ENCODE measurements at regions of chrX and their contacts with region 1.

Region 1: DNA sequence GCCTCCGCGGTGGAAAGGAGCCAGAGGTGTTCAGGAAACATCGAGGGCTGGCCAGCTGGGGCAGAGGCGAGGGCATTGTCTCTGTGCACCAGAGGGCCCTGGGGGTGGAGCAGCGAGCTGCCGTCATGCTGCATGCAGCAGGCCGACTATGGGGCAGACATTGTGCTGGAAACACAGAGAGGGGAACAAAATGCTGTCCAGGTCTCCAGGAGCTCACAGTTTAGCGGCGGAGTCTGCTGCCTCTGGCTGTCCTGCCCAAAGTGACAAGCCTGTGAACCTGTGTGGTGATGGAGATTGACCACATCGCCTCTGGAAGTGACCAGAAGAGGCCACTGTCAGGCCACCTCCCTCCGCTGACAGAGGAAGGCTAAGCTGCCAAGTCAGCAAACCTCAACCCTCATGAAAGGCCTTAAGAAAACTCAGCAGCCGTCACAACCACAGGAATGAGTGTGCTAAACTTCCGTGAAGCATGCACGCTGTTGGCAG is 20.1 kb upstream of the SASH3 start:
- DNase-seq: peak in 12 of 14 experiments; percentile 28 to 85 (median 46)
- ATAC-seq: peak; percentile 81
- H3K4me3 ChIP-seq: peak overlapping the region; percentile 5
- H3K4me3 Mint-ChIP-seq: peak overlapping the region; percentile 72
- H3K27ac ChIP-seq: peak overlapping the region; percentile 35 to 40
- H3K27ac Mint-ChIP-seq: peak overlapping the region; percentile 85
- H3K4me1 ChIP-seq: peaks cover 82% of the 10 kb centered on the region
- H3K4me1 Mint-ChIP-seq: peaks cover 73% of the 10 kb centered on the region
- H3K27me3 ChIP-seq: no peaks in the 10 kb centered on the region
- H3K27me3 Mint-ChIP-seq: no peaks in the 10 kb centered on the region
- CTCF ChIP-seq: no peak

Region 2: DNA sequence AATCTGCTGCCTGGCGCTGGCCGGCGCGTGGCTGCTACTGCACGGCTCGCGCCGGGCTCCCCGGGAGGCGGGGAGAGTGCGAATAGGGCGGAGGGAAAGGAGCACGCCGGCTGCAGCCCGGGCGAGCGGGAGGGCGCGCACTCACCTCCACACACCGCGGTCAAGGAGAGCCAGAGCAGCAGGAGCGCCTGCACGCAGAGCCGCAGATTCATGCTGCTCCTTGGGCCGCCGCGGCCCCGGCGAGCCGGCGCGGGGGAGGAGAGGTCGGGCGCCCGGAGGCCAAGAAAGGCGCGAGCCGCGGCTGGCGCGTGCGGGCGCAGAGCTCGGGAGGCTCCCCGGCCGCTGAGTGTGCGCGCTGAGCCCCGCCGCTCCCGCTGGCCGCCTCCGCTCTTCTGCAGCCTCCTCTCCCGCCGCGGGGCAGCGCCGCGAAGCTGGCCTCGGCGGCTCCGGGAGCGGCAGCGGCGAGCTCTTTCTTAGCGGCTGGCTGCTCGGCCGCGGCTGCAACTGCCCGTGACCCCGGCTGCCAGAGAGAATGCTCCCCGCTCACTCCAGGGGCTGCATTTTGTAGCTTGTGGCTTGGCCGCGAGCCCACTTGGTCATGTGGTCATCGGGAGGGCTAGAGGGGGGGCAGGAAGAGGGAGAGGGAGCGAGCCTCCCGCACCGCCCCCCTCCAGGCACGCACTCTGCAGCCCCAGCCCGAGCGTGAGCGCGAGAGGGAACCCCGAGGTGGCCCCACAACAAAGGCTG is 105.0 kb before region 1 on chrX and contains the start of gene APLN:
- CTCF ChIA-PET with region 1: no interaction called
- POLR2A ChIA-PET with region 1: no interaction called
- intact Hi-C with region 1: no loop called
- DNase-seq: peak in 4 of 14 experiments; percentile 4 to 36 (median 30)
- ATAC-seq: peak; percentile 68
- H3K4me3 ChIP-seq: peak within 1 kb of the TSS; percentile 42
- H3K4me3 Mint-ChIP-seq: peak within 1 kb of the TSS; percentile 67
- H3K27ac ChIP-seq: no peak within 1 kb of the TSS
- H3K27ac Mint-ChIP-seq: no peak within 1 kb of the TSS
- H3K4me1 ChIP-seq: peaks cover 15% of the 10 kb centered on the region
- H3K4me1 Mint-ChIP-seq: peaks cover 9% of the 10 kb centered on the region
- H3K27me3 ChIP-seq: peaks cover 4 to 16% of the 10 kb centered on the region in 2 experiments
- H3K27me3 Mint-ChIP-seq: peaks cover 14% of the 10 kb centered on the region
- CTCF ChIP-seq: no peak
- total RNA-seq, gene APLN: not detected

Region 3: DNA sequence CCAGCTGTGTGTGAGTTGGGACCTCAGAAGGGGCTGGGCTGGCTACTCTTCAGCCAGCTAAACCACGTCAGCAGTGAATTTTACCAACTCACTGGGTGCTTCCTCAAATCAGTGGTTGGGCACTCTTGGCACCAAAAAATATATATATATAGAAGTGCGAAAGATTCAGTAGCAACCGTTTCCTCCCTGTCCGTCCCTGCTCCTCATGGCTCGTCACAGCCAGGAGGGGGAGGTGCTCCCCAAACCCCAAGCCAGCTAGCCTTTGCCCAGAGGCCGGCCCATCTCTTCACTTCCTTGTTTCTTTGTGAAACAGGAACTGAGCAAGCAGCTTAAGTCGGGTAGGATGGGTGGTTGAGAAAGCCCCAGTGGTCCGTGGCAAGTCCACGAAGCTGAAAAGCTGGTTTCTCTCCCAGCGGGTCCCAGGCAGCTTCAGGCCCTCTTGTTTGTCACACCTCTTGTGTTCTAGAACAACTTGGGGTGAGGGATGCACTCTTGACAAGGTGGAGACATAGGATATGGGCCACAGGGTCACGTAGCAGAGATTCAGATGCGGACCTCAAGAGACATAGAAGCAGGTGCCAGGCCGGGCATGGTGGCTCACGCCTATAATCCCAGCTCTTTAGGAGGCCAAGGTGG is 13.3 kb after region 1 on chrX:
- CTCF ChIA-PET with region 1: interaction called, 9 read pairs
- POLR2A ChIA-PET with region 1: interaction called, 72 read pairs
- intact Hi-C with region 1: loop called (anchors 1 to 2 kb)
- DNase-seq: peak in 6 of 14 experiments; percentile 18 to 80 (median 56)
- ATAC-seq: no peak
- H3K4me3 ChIP-seq: no peak overlapping the region
- H3K4me3 Mint-ChIP-seq: peak overlapping the region; percentile 68
- H3K27ac ChIP-seq: peak overlapping the region; percentile 40 to 66
- H3K27ac Mint-ChIP-seq: peak overlapping the region; percentile 99
- H3K4me1 ChIP-seq: peaks cover 97% of the 10 kb centered on the region
- H3K4me1 Mint-ChIP-seq: peaks cover 87% of the 10 kb centered on the region
- H3K27me3 ChIP-seq: no peaks in the 10 kb centered on the region
- H3K27me3 Mint-ChIP-seq: no peaks in the 10 kb centered on the region
- CTCF ChIP-seq: no peak

Region 4: DNA sequence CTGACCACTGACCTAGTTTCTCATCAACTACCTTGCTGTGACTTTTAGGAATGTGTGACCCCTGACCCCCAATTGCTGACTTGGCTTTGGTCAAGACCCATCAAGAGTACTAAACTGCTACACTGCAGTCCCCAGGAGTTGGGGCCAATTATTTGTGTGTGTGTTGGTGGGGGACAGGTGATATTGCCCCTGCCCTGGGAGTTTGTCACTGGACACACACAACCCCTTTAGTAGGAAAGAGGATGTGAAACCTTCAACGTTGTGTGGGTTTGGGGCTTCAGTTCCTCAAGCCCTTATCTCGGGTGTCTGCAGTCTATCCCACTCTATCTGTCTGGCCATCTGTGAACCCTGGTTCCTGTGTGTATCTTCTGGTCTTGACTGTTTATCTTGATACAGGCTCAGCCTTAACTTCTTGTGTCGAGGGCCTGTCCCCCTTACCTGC is 26.6 kb after region 1 on chrX:
- CTCF ChIA-PET with region 1: interaction called, 10 read pairs
- POLR2A ChIA-PET with region 1: interaction called, 72 read pairs
- intact Hi-C with region 1: loop called (anchors 2 to 5 kb)
- DNase-seq: no peak
- ATAC-seq: no peak
- H3K4me3 ChIP-seq: peak overlapping the region; percentile 37
- H3K4me3 Mint-ChIP-seq: peak overlapping the region; percentile 83
- H3K27ac ChIP-seq: peak overlapping the region; percentile 52 to 69
- H3K27ac Mint-ChIP-seq: peak overlapping the region; percentile 99
- H3K4me1 ChIP-seq: peaks cover 75% of the 10 kb centered on the region
- H3K4me1 Mint-ChIP-seq: peaks cover 56% of the 10 kb centered on the region
- H3K27me3 ChIP-seq: no peaks in the 10 kb centered on the region
- H3K27me3 Mint-ChIP-seq: no peaks in the 10 kb centered on the region
- CTCF ChIP-seq: no peak

Region 5: DNA sequence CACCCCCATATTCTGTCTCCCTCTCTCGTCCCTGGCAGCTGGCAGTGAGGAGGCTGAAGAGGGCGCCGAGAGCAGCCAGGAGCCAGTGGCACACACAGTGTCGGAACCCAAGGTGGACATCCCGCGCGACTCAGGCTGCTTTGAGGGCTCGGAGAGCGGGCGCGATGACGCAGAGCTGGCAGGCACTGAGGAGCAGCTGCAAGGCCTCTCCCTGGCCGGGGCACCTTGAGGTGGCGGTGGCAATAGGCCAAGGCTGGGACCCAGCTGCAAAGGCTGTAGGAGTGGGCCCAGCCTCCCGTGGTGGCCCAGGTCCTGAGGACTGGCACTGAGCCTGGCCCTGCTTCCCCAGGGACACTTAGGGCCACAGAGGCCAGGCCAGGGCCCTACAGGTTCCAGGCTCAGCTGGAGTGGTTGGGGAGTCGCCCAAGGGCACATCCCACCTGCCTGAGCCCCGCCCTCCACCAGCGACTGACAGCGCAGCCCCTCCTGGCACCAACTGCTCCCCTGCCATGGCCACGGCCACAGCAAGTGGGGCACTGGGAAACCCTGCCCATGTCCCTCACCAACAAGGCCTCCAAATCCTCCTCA is 34.1 kb after region 1 on chrX:
- CTCF ChIA-PET with region 1: interaction called, 4 read pairs
- POLR2A ChIA-PET with region 1: interaction called, 5 read pairs
- intact Hi-C with region 1: loop called in 1 of 2 experiments (anchors 5 kb)
- DNase-seq: no peak
- ATAC-seq: no peak
- H3K4me3 ChIP-seq: no peak overlapping the region
- H3K4me3 Mint-ChIP-seq: no peak overlapping the region
- H3K27ac ChIP-seq: peak overlapping the region in 1 of 2 donors; percentile 35
- H3K27ac Mint-ChIP-seq: no peak overlapping the region
- H3K4me1 ChIP-seq: peaks cover 22% of the 10 kb centered on the region
- H3K4me1 Mint-ChIP-seq: peaks cover 6% of the 10 kb centered on the region
- H3K27me3 ChIP-seq: no peaks in the 10 kb centered on the region
- H3K27me3 Mint-ChIP-seq: no peaks in the 10 kb centered on the region
- CTCF ChIP-seq: no peak

Region 6: DNA sequence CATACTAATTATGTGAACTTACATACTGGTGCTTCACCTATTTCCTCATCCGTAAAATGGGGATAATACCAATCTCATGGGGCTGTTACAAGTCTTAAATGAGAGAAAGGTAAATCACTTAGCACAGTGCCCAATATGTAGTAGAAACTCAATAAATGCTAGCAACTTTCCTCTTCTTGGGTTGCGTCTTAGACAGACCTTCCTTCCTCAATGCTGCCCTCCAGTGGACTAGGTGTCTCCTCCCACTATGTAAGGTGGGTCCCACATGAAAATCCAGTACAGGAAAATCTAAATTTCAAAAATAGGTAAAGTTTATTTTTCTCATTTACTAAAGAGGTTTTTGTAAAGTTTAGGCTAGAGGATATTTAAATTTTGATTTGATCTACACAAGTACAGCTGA is 63.5 kb after region 1 on chrX:
- CTCF ChIA-PET with region 1: interaction called, 11 read pairs
- POLR2A ChIA-PET with region 1: no interaction called
- intact Hi-C with region 1: loop called (anchors 5 kb)
- DNase-seq: peak; percentile 16 to 80 (median 43)
- ATAC-seq: peak; percentile 76
- H3K4me3 ChIP-seq: no peak overlapping the region
- H3K4me3 Mint-ChIP-seq: no peak overlapping the region
- H3K27ac ChIP-seq: no peak overlapping the region
- H3K27ac Mint-ChIP-seq: no peak overlapping the region
- H3K4me1 ChIP-seq: peaks cover 5% of the 10 kb centered on the region
- H3K4me1 Mint-ChIP-seq: peaks cover 18% of the 10 kb centered on the region
- H3K27me3 ChIP-seq: no peaks in the 10 kb centered on the region
- H3K27me3 Mint-ChIP-seq: no peaks in the 10 kb centered on the region
- CTCF ChIP-seq: peak; percentile 73

Region 7: DNA sequence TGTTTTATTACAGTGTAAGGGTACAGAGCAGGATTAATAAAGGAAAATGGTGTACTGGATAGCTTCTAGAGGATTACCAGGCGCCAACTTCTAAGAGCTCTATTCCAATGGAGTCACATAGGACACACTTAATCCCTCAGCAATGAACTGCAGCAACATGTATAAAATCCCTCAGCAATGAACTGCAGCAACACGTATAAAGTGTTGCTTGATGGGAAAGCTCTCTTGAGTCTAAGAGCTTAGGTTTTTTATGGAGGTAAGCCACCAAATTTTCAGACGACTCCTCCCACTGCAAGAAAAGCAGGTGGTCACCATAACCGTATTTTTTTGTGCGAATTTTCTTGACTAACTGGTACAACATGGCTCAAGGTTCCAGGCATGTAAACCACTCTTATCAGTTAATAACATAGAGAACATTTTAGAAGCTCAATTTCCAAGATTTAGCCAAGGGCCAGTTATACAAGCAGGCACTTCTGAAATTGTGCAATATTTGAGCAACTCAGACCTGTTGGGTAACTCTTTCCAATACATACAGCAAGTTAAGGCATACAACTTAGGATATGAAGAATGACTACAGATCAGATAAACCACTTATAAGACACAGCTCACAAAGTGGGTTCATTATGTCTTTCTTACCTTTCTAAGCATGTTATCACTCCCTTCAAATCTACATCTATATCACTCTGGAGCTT is 465.0 kb after region 1 on chrX:
- CTCF ChIA-PET with region 1: no interaction called
- POLR2A ChIA-PET with region 1: no interaction called
- intact Hi-C with region 1: no loop called
- DNase-seq: no peak
- ATAC-seq: no peak
- H3K4me3 ChIP-seq: no peak overlapping the region
- H3K4me3 Mint-ChIP-seq: no peak overlapping the region
- H3K27ac ChIP-seq: no peak overlapping the region
- H3K27ac Mint-ChIP-seq: no peak overlapping the region
- H3K4me1 ChIP-seq: no peaks in the 10 kb centered on the region
- H3K4me1 Mint-ChIP-seq: peaks cover 7% of the 10 kb centered on the region
- H3K27me3 ChIP-seq: no peaks in the 10 kb centered on the region
- H3K27me3 Mint-ChIP-seq: no peaks in the 10 kb centered on the region
- CTCF ChIP-seq: no peak

Measured in CD4-positive, alpha-beta T cell (primary cell).